A549 (cell line): ENCODE measurements at regions of chr17 and their contacts with region 1.

Region 1: GRCh38 chr17:9924735-9925191 is 19.7 kb upstream of the RCVRN start:
- DNase-seq: peak; percentile 78 to 87
- ATAC-seq: peak; percentile 76 to 86
- H3K4me3 ChIP-seq: no peak overlapping the region
- H3K27ac ChIP-seq: peak overlapping the region; percentile 47 to 82
- H3K4me1 ChIP-seq: peaks cover 38% of the 10 kb centered on the region
- CTCF ChIP-seq: peak; percentile 90
- EP300 ChIP-seq: no peak
- POLR2A ChIP-seq: no peak
- RAD21 ChIP-seq: peak; percentile 92 to 94

Region 2: DNA sequence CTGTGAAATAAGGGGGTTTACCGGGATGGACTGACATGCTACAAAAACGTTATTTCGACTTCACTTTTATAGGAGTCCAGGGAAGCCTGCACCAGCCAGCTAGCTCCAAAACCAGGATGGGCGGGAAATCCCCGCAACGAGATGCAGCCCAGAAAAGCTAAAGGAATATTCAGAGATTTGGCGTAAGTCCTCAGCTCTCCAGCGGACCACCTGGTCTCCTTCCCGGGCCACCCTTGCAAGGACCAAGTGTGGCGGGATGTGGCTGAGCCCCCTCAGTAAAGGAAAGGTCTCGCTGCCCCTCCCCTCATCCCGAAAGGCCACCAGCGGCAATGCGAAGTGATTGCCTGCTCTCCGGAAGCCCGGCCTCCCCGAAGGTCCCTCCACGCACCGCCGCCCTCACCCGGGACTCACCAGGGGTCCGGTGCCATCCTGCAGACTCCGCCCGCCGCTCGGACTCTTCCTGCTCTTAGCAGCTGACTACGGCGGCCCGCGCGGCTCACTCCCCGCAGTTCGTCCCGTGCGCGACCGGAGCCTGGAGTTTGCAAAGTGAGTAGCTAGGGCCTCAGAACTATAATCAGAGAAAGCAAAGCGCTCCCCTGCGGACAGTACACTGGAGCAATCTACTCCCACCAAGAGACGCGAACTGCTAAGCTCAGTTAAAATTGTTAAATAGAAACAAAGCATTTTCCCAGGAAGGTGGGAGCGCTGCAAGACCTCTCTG is 349.2 kb before region 1 on chr17 and contains the start of gene STX8:
- CTCF ChIA-PET with region 1: interaction called, 44 read pairs
- POLR2A ChIA-PET with region 1: no interaction called
- DNase-seq: peak; percentile 86 to 94
- ATAC-seq: peak; percentile 89 to 94
- H3K4me3 ChIP-seq: peak within 1 kb of the TSS; percentile 93
- H3K27ac ChIP-seq: peak within 1 kb of the TSS; percentile 88 to 90
- H3K4me1 ChIP-seq: peaks cover 15% of the 10 kb centered on the region
- CTCF ChIP-seq: no peak
- EP300 ChIP-seq: no peak
- POLR2A ChIP-seq: peak; percentile 83
- RAD21 ChIP-seq: 0 out of 5 replicates have a peak, but pooled peaks of 1 of the 2 experiments have one; percentile 16
- polyA plus RNA-seq, gene STX8: 155 and 168 TPM in 2 replicates

Region 3: DNA sequence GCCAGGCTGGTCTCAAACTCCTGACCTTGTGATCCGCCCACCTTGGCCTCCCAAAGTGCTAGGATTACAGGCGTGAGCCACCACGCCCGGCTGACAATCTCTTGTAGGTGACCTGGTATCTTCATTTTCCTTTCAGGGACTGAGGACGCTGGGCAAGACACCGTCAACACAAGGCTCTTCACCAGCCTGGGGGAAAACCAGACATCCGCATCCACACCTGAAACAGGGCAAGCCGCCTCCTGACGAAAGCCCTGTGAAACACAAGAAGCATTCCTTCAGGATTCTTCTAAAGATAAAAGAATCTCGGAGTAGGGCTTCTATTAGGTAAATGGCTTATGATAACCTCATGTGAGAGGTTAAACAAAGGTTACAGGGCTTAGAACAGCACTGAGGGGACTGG is 181.7 kb before region 1 on chr17:
- CTCF ChIA-PET with region 1: interaction called, 11 read pairs
- POLR2A ChIA-PET with region 1: no interaction called
- DNase-seq: no peak
- ATAC-seq: no peak
- H3K4me3 ChIP-seq: no peak overlapping the region
- H3K27ac ChIP-seq: no peak overlapping the region
- H3K4me1 ChIP-seq: no peaks in the 10 kb centered on the region
- CTCF ChIP-seq: no peak
- EP300 ChIP-seq: no peak
- POLR2A ChIP-seq: no peak
- RAD21 ChIP-seq: no peak

Region 4: GRCh38 chr17:9837551-9838471 is 87.0 kb before region 1 on chr17:
- CTCF ChIA-PET with region 1: interaction called, 101 read pairs
- POLR2A ChIA-PET with region 1: interaction called, 9 read pairs
- DNase-seq: peak; percentile 90 to 98
- ATAC-seq: peak; percentile 60 to 78
- H3K4me3 ChIP-seq: peak overlapping the region; percentile 1; the same call in 1 of the 3 replicates
- H3K27ac ChIP-seq: peak overlapping the region; percentile 96 to 97
- H3K4me1 ChIP-seq: peaks cover 73% of the 10 kb centered on the region
- CTCF ChIP-seq: no peak
- EP300 ChIP-seq: peak; percentile 99
- POLR2A ChIP-seq: no peak
- RAD21 ChIP-seq: peak; percentile 32 to 73; a peak in 3 of 5 replicates

Region 5: DNA sequence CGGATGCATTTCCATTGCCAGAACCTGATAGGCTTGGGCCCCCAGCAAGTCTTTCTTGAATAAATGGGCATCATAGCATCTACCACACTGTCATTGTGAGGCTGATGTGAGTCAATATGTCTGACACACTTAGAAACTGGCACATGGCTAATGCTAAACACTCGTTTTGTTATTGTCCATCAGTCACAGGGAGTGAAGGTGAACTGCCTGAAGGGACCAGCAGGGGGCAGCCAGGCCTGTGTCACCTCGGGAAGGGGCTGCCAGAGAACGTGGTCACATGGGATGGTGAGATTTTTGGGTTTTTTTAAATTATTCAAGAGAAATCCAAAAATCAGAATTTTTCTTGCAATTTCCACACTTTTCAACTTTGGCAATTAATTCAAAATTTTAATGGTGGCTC is 18.9 kb before region 1 on chr17:
- CTCF ChIA-PET with region 1: interaction called, 22 read pairs
- POLR2A ChIA-PET with region 1: no interaction called
- DNase-seq: peak; percentile 64 to 72
- ATAC-seq: peak; percentile 55 to 71; a peak in 4 of 6 replicates
- H3K4me3 ChIP-seq: no peak overlapping the region
- H3K27ac ChIP-seq: peak overlapping the region in 1 of 2 experiments; percentile 50; a peak in 3 of 6 replicates
- H3K4me1 ChIP-seq: peaks cover 23% of the 10 kb centered on the region
- CTCF ChIP-seq: peak; percentile 38
- EP300 ChIP-seq: no peak
- POLR2A ChIP-seq: no peak
- RAD21 ChIP-seq: peak in 1 of 2 experiments; percentile 49; a peak in 3 of 5 replicates

Region 6: GRCh38 chr17:9948928-9949327 is 24.2 kb after region 1 on chr17:
- CTCF ChIA-PET with region 1: interaction called, 155 read pairs
- POLR2A ChIA-PET with region 1: interaction called, 3 read pairs
- DNase-seq: no peak
- ATAC-seq: no peak
- H3K4me3 ChIP-seq: no peak overlapping the region
- H3K27ac ChIP-seq: no peak overlapping the region
- H3K4me1 ChIP-seq: no peaks in the 10 kb centered on the region
- CTCF ChIP-seq: no peak
- EP300 ChIP-seq: no peak
- POLR2A ChIP-seq: no peak
- RAD21 ChIP-seq: no peak

Region 7: DNA sequence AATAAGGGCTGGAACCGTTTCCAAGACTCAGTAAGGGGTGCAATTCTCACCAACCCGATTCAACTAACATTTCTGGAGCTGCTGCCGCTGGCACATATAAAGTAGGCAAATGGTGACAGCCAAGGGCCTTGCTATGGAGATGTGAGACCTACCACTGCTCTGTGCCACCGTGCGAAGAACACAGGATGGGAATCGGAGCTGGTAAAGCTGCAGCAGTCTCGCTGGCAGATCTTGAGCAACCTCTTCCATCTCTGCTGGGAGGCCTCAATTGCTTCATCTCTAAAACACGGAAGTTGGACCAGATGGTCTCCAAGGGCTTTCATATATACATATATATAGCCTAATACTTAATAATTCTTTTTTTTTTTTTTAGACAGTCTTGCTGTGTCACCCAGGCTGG is 109.2 kb after region 1 on chr17:
- CTCF ChIA-PET with region 1: no interaction called
- POLR2A ChIA-PET with region 1: no interaction called
- DNase-seq: no peak
- ATAC-seq: no peak
- H3K4me3 ChIP-seq: no peak overlapping the region
- H3K27ac ChIP-seq: no peak overlapping the region
- H3K4me1 ChIP-seq: 0 out of 3 replicates have a peak, but pooled peaks cover 8% of the 10 kb centered on the region
- CTCF ChIP-seq: no peak
- EP300 ChIP-seq: no peak
- POLR2A ChIP-seq: no peak
- RAD21 ChIP-seq: no peak

Region 8: GRCh38 chr17:10087081-10087754 is 162.5 kb after region 1 on chr17:
- CTCF ChIA-PET with region 1: no interaction called
- POLR2A ChIA-PET with region 1: no interaction called
- DNase-seq: no peak
- ATAC-seq: no peak
- H3K4me3 ChIP-seq: no peak overlapping the region
- H3K27ac ChIP-seq: no peak overlapping the region
- H3K4me1 ChIP-seq: peaks cover 10% of the 10 kb centered on the region
- CTCF ChIP-seq: no peak
- EP300 ChIP-seq: no peak
- POLR2A ChIP-seq: no peak
- RAD21 ChIP-seq: no peak

Region 9: GRCh38 chr17:10337976-10338375 is 413.2 kb after region 1 on chr17:
- CTCF ChIA-PET with region 1: no interaction called
- POLR2A ChIA-PET with region 1: no interaction called
- DNase-seq: no peak
- ATAC-seq: no peak
- H3K4me3 ChIP-seq: no peak overlapping the region
- H3K27ac ChIP-seq: no peak overlapping the region
- H3K4me1 ChIP-seq: no peaks in the 10 kb centered on the region
- CTCF ChIP-seq: no peak
- EP300 ChIP-seq: no peak
- POLR2A ChIP-seq: no peak
- RAD21 ChIP-seq: no peak